PC-3 (cell line): ENCODE measurements at regions of chr1 and their contacts with region 1.

Region 1: GRCh38 chr1:98086796-98087441 is 166.1 kb upstream of the DPYD start:
- DNase-seq: peak; percentile 97
- ATAC-seq: peak; percentile 83
- H3K4me3 ChIP-seq: no peak overlapping the region
- H3K27ac ChIP-seq: peak overlapping the region; percentile 74
- H3K4me1 ChIP-seq: peaks cover 66% of the 10 kb centered on the region
- H3K27me3 ChIP-seq: no peaks in the 10 kb centered on the region
- CTCF ChIP-seq: no peak

Region 2: DNA sequence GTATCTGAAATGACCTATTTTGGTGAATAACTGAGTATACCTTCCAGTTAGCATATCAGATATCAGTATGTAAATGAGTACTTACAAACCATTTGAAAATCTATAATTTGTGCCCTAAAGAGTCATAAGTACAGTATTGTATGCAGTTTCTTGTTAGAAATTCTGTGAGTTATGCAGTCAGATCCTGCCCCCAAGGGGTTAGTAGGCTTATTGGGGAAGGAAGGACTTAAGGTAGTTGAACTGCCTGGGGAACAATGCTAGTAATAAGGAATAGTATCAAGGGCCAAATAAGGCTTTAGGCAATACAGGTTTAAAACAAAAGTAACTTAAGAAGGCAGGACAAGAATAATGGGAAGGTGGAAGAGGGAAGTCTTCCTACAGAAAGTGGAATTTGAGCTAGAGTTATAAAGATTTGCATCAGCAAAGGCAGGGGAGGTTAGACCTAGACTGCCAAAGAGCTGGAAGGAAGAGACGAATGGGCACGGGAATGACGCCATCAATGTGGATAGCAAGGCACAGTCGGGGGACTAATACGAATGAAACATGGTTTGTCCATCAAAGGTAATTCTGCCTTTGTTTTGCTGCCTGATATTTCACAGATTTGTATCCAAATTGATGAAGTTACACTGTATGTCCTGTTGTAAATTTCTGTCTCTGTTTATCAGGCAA is 16.8 kb after region 1 on chr1:
- CTCF ChIA-PET with region 1: no interaction called
- POLR2A ChIA-PET with region 1: no interaction called
- intact Hi-C with region 1: loop called (anchors 2 kb)
- DNase-seq: peak; percentile 23
- ATAC-seq: peak; percentile 43
- H3K4me3 ChIP-seq: no peak overlapping the region
- H3K27ac ChIP-seq: no peak overlapping the region
- H3K4me1 ChIP-seq: peaks cover 27% of the 10 kb centered on the region
- H3K27me3 ChIP-seq: no peaks in the 10 kb centered on the region
- CTCF ChIP-seq: no peak

Region 3: GRCh38 chr1:98260839-98261238 is 173.9 kb after region 1 on chr1:
- CTCF ChIA-PET with region 1: no interaction called
- POLR2A ChIA-PET with region 1: no interaction called
- intact Hi-C with region 1: loop called (anchors 10 kb)
- DNase-seq: no peak
- ATAC-seq: no peak
- H3K4me3 ChIP-seq: no peak overlapping the region
- H3K27ac ChIP-seq: no peak overlapping the region
- H3K4me1 ChIP-seq: peaks cover 12% of the 10 kb centered on the region
- H3K27me3 ChIP-seq: no peaks in the 10 kb centered on the region
- CTCF ChIP-seq: 0 out of 2 replicates have a peak, but pooled peaks have one; percentile 22

Region 4: DNA sequence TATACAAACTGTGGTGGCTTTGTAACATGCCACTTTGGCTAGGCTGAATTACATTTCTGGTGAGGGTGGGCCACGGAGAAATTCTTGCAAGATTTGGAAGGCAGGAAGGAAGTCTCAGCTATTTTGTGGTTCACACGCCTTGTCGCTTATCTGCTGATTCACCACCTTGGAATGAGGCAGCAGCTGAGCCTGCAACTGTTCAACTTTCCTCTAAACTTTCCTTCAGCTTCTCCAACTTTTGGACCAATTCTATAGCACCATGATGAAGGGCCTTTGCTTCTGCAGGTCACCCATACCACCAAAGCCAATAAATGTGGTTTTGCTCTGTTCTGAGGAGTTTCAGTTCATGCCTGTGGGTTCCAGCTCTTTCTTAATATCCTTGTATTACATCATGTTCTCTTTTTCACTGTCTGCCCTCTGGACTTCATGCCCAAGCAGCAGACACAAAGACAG is 237.0 kb after region 1 on chr1:
- CTCF ChIA-PET with region 1: no interaction called
- POLR2A ChIA-PET with region 1: no interaction called
- intact Hi-C with region 1: no loop called
- DNase-seq: peak; percentile 98
- ATAC-seq: peak; percentile 68
- H3K4me3 ChIP-seq: peak overlapping the region; percentile 32
- H3K27ac ChIP-seq: peak overlapping the region; percentile 96
- H3K4me1 ChIP-seq: peaks cover 80% of the 10 kb centered on the region
- H3K27me3 ChIP-seq: no peaks in the 10 kb centered on the region
- CTCF ChIP-seq: no peak